Transverse colon (tissue), 4 donors: ENCODE measurements at regions of chr6 and their contacts with region 1.

Region 1: GRCh38 chr6:110398778-110399177 is 16.6 kb downstream of the DDO start:
- DNase-seq: no peak
- H3K4me3 ChIP-seq: no peak overlapping the region
- H3K27ac ChIP-seq: no peak overlapping the region
- H3K4me1 ChIP-seq: peaks cover 0 to 3% (median 0%) of the 10 kb centered on the region in 4 donors
- H3K27me3 ChIP-seq: no peaks in the 10 kb centered on the region
- CTCF ChIP-seq: no peak
- EP300 ChIP-seq: no peak
- POLR2A ChIP-seq: no peak

Region 2: GRCh38 chr6:109690737-109691621 is 707.8 kb before region 1 on chr6 and contains the starts of genes AK9 and FIG4:
- in situ Hi-C with region 1: loop called in 1 of 4 experiments (anchors 10 kb)
- intact Hi-C with region 1: no loop called
- DNase-seq: peak; percentile 97
- H3K4me3 ChIP-seq: peak within 1 kb of the TSS; percentile 38 to 78 (median 69)
- H3K27ac ChIP-seq: peak within 1 kb of the TSS; percentile 86 to 96 (median 92)
- H3K4me1 ChIP-seq: peaks cover 0 to 26% (median 21%) of the 10 kb centered on the region in 4 donors
- H3K27me3 ChIP-seq: no peaks in the 10 kb centered on the region
- CTCF ChIP-seq: peak in 2 of 5 experiments; percentile 16 to 18
- EP300 ChIP-seq: no peak
- POLR2A ChIP-seq: peak; percentile 82
- total RNA-seq, gene AK9: 12.0 to 32.0 (median 23.2) TPM
- total RNA-seq, gene FIG4: 3.7 to 21.6 (median 15.2) TPM

Region 3: DNA sequence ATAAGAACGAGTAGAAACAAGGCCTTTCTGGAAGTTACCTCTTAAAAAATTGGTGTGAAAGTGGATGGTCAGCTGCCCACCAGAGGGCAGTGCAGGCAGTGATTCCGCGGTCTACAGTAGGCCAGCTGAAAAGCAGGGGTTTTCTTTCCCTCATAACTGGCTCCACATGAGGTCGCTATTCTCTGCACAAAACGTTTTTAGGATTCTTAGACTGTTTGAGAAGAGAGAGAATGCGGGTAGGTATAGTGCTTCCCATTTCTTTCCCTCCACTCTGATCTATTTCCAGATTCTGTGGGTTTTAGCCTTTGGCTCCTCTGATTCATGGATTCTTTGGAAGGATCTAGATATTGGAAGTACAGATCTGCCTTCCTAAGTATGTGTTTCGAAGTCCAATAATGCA is 693.5 kb before region 1 on chr6:
- in situ Hi-C with region 1: loop called in 3 of 4 experiments (anchors 10 to 25 kb)
- intact Hi-C with region 1: no loop called
- DNase-seq: peak; percentile 84
- H3K4me3 ChIP-seq: no peak overlapping the region
- H3K27ac ChIP-seq: no peak overlapping the region
- H3K4me1 ChIP-seq: peaks cover 0 to 3% (median 0%) of the 10 kb centered on the region in 4 donors
- H3K27me3 ChIP-seq: no peaks in the 10 kb centered on the region
- CTCF ChIP-seq: peak; percentile 90 to 98 (median 93)
- EP300 ChIP-seq: no peak
- POLR2A ChIP-seq: no peak

Region 4: DNA sequence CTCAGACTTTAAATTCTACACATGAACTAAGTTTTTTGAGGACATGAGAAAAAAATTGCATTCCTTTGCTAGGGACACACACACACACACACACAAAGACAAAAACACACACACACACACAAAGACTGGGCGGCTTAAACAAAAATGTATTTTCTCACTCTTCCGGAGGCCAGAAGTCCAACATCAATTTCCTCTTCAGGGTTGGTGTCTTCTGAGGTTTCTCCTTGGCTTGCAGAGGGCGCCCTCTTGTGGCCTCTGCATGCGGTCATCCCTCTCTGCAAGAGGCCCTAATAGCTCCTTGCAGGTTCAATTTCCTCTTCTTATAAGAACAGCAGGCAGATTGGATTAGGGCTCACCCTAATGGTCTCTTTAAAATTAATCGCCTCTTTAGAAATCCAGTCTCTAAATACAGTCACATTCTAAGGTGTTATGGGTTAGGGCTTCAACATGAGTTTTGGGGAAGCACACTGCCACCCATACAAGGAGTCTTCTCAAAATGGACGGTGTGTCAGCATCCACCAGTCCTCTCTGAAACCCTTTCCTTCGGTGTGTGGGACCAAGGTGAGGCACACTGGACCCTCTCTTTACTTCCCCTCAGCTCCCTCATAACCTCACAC is 359.3 kb before region 1 on chr6:
- in situ Hi-C with region 1: loop called in 1 of 4 experiments (anchors 25 kb)
- intact Hi-C with region 1: no loop called
- DNase-seq: peak; percentile 92
- H3K4me3 ChIP-seq: peak overlapping the region in 3 of 4 donors; percentile 4 to 51 (median 11)
- H3K27ac ChIP-seq: peak overlapping the region in 3 of 4 donors; percentile 14 to 69 (median 41)
- H3K4me1 ChIP-seq: peaks cover 0 to 16% (median 0%) of the 10 kb centered on the region in 4 donors
- H3K27me3 ChIP-seq: no peaks in the 10 kb centered on the region
- CTCF ChIP-seq: peak; percentile 84 to 91 (median 86)
- EP300 ChIP-seq: no peak
- POLR2A ChIP-seq: no peak

Region 5: GRCh38 chr6:110053395-110054240 is 345.2 kb before region 1 on chr6:
- in situ Hi-C with region 1: loop called in 3 of 4 experiments (anchors 25 kb)
- intact Hi-C with region 1: no loop called
- DNase-seq: no peak
- H3K4me3 ChIP-seq: no peak overlapping the region
- H3K27ac ChIP-seq: no peak overlapping the region
- H3K4me1 ChIP-seq: no peaks in the 10 kb centered on the region
- H3K27me3 ChIP-seq: no peaks in the 10 kb centered on the region
- CTCF ChIP-seq: peak; percentile 41 to 64 (median 63)
- EP300 ChIP-seq: no peak
- POLR2A ChIP-seq: no peak

Region 6: GRCh38 chr6:110125361-110125760 is 273.4 kb before region 1 on chr6:
- in situ Hi-C with region 1: no loop called
- intact Hi-C with region 1: no loop called
- DNase-seq: no peak
- H3K4me3 ChIP-seq: no peak overlapping the region
- H3K27ac ChIP-seq: no peak overlapping the region
- H3K4me1 ChIP-seq: no peaks in the 10 kb centered on the region
- H3K27me3 ChIP-seq: no peaks in the 10 kb centered on the region
- CTCF ChIP-seq: no peak
- EP300 ChIP-seq: no peak
- POLR2A ChIP-seq: no peak

Region 7: DNA sequence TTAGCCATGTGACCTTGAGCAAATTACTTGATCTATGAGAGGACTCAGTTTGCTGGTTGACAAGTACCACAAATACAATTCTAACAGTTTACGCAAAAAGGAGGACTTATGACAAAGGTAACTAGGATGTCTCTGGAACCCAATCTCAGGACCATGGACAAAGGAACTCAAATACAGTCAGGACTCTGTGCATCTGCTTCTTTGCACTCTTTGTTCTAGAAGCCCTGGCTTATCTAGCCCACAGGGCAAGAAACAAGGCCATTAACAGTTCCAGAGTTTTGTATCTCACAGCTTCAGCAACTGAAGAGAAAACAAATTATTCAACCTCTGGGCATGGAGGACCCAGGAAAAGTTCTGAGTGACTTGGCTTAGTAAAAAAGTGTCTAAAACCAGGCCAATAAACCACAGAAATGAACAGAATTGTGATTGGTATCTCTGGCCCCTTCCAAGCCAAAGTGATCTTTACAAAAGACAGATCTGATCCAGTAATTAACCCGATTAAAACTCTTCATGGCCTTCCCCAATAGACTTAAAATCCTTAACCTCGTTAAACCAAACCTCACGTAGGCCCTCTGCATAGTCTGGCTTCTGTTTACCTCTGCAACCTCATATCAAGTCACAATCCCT is 225.2 kb before region 1 on chr6:
- in situ Hi-C with region 1: loop called in 3 of 4 experiments (anchors 10 to 25 kb)
- intact Hi-C with region 1: no loop called
- DNase-seq: no peak
- H3K4me3 ChIP-seq: no peak overlapping the region
- H3K27ac ChIP-seq: no peak overlapping the region
- H3K4me1 ChIP-seq: peaks cover 4 to 8% (median 6%) of the 10 kb centered on the region in 4 donors
- H3K27me3 ChIP-seq: peaks cover 3% of the 10 kb centered on the region
- CTCF ChIP-seq: no peak
- EP300 ChIP-seq: no peak
- POLR2A ChIP-seq: no peak

Region 8: GRCh38 chr6:110179401-110180227 is 219.2 kb before region 1 on chr6 and contains the start of gene WASF1:
- in situ Hi-C with region 1: loop called in 3 of 4 experiments (anchors 10 to 25 kb)
- intact Hi-C with region 1: no loop called
- DNase-seq: peak; percentile 94
- H3K4me3 ChIP-seq: peak within 1 kb of the TSS; percentile 73 to 84 (median 80)
- H3K27ac ChIP-seq: peak within 1 kb of the TSS; percentile 86 to 90 (median 88)
- H3K4me1 ChIP-seq: peaks cover 14 to 46% (median 30%) of the 10 kb centered on the region in 4 donors
- H3K27me3 ChIP-seq: peaks cover 3% of the 10 kb centered on the region
- CTCF ChIP-seq: no peak
- EP300 ChIP-seq: no peak
- POLR2A ChIP-seq: no peak
- total RNA-seq, gene WASF1: 1.9 to 7.1 (median 5.9) TPM